CD4-positive, alpha-beta T cell (primary cell): ENCODE measurements at regions of chr1 and their contacts with region 1.

Region 1: DNA sequence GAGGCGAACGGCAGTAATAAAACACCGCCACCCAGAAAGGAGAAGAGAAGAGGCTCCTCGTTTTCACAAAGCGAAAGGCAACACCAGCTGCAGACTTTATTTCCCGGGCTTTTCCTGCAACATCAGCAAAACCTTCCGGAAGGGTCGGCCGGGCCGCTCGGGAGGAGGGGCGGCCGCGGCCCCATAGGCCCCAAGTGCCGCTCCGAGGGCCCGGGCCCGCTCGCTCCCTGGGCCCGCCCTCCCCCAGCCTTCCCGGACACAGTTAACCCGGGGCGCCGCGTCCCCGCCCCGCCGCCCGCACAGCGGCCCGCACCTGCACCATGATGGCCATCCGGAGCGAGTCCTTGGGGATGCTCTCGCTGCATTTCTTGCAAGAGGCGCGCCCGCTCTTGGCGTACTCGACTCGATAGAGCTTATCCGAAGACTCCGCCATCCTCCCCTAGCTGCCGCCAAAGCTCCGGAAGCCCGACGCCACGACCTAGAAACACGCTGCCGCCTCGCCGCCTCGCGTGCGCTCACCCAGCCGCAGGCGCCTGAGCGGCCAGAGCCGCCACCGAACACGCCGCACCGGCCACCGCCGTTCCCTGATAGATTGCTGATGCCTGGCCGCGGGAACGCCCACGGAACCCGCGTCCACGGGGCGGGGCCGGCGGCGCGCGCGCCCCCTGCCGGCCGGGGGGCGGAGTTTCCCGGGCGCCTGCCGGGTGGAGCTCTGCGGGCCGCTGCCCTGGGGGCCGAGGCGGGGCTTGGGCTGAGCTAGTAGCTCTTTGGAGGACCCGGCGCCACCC is at the start of gene PARP1:
- DNase-seq: peak; percentile 75 to 95 (median 85)
- ATAC-seq: peak; percentile 82
- H3K4me3 ChIP-seq: peak within 1 kb of the TSS; percentile 79
- H3K4me3 Mint-ChIP-seq: peak within 1 kb of the TSS; percentile 98
- H3K27ac ChIP-seq: peak within 1 kb of the TSS; percentile 48 to 55
- H3K27ac Mint-ChIP-seq: peak within 1 kb of the TSS; percentile 94
- H3K4me1 ChIP-seq: peaks cover 46% of the 10 kb centered on the region
- H3K4me1 Mint-ChIP-seq: peaks cover 55% of the 10 kb centered on the region
- H3K27me3 ChIP-seq: no peaks in the 10 kb centered on the region
- H3K27me3 Mint-ChIP-seq: no peaks in the 10 kb centered on the region
- CTCF ChIP-seq: peak; percentile 69
- total RNA-seq, gene PARP1: 59.3 to 63.6 TPM

Region 2: DNA sequence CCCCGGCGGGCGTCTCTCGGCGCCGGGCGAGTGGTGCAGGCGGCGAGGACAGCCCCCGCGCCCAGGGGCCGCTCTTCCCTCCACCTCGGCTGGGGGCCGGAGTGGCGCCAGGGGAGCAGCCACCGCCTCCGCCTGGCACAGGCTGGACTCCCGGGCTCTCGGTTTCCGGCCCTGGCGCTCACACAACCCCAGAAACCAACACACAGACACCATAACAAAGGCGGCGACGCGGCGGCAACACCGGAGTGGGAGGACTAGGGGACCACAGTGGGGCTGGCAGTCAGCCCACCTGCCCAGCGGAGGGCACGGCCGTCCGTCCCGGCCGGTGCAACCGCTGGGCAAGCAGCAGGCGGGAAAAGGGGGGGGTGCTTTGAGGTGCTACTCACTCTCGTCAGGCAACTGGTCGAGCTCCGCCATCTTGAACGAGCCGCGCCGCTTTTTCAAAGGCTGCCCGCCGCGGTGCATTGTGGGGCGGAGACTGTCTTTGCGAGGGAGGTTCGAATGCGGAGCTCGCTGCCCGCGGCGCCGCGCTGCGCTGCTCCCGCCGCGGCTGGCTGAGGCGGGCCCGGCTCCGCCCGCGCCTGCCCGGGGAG is 98.9 kb before region 1 on chr1 and contains the start of gene LIN9:
- CTCF ChIA-PET with region 1: interaction called, 5 read pairs
- POLR2A ChIA-PET with region 1: interaction called, 18 read pairs
- intact Hi-C with region 1: loop called in 1 of 2 experiments (anchors 5 kb)
- DNase-seq: peak; percentile 83 to 94 (median 89)
- ATAC-seq: peak; percentile 91
- H3K4me3 ChIP-seq: peak within 1 kb of the TSS; percentile 98
- H3K4me3 Mint-ChIP-seq: peak within 1 kb of the TSS; percentile 95
- H3K27ac ChIP-seq: peak within 1 kb of the TSS in 1 of 2 donors; percentile 30
- H3K27ac Mint-ChIP-seq: peak within 1 kb of the TSS; percentile 67
- H3K4me1 ChIP-seq: peaks cover 12% of the 10 kb centered on the region
- H3K4me1 Mint-ChIP-seq: peaks cover 26% of the 10 kb centered on the region
- H3K27me3 ChIP-seq: peaks cover 0 to 8% of the 10 kb centered on the region in 2 experiments
- H3K27me3 Mint-ChIP-seq: peaks cover 25% of the 10 kb centered on the region
- CTCF ChIP-seq: no peak
- total RNA-seq, gene LIN9: 1.3 to 1.5 TPM

Region 3: DNA sequence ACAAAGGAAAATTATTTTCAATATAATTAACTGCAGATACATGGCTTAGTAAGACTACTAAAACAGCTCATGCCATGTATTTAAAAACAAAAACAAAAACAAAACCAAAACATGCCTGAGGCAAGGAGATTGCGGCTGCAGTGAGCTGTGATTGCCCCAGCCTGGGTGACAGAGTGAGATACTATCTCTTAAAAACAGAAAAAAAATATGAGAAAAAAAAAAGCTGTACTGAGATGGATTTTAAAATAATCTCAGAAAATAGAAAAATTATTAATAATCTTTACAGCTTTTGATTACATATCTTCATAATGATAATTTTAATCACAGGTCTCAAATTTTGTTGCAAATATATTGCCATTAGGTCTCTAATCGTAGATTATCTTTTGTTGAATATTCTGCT is 74.7 kb before region 1 on chr1:
- CTCF ChIA-PET with region 1: interaction called, 12 read pairs
- POLR2A ChIA-PET with region 1: interaction called, 4 read pairs
- intact Hi-C with region 1: no loop called
- DNase-seq: peak in 2 of 14 experiments; percentile 11 to 23
- ATAC-seq: peak; percentile 35
- H3K4me3 ChIP-seq: peak overlapping the region; percentile 13
- H3K4me3 Mint-ChIP-seq: peak overlapping the region; percentile 26
- H3K27ac ChIP-seq: no peak overlapping the region
- H3K27ac Mint-ChIP-seq: no peak overlapping the region
- H3K4me1 ChIP-seq: peaks cover 4% of the 10 kb centered on the region
- H3K4me1 Mint-ChIP-seq: peaks cover 6% of the 10 kb centered on the region
- H3K27me3 ChIP-seq: no peaks in the 10 kb centered on the region
- H3K27me3 Mint-ChIP-seq: no peaks in the 10 kb centered on the region
- CTCF ChIP-seq: no peak

Region 4: DNA sequence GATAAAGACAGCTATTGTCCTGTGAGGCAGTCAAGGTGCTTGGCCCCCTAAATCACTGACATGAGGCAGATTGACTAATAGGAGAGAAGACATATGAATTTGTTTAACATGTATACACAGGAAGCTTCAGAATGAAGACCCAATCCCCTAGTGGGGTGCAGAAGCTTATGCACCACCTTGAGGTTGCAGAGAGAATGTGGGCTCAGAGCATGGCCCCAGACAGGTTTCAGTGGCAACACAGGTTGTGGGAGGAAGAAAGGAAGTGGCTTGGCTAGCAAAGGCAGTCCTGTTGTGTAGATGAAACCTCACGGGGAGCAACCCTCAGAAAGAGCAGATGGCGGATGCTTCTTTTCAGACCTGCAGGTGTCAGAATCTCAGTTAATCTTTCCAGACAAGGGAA is 37.2 kb after region 1 on chr1:
- CTCF ChIA-PET with region 1: interaction called, 5 read pairs
- POLR2A ChIA-PET with region 1: interaction called, 25 read pairs
- intact Hi-C with region 1: loop called in 1 of 2 experiments (anchors 5 kb)
- DNase-seq: peak; percentile 37 to 89 (median 60)
- ATAC-seq: peak; percentile 99
- H3K4me3 ChIP-seq: no peak overlapping the region
- H3K4me3 Mint-ChIP-seq: peak overlapping the region; percentile 42
- H3K27ac ChIP-seq: peak overlapping the region in 1 of 2 donors; percentile 10
- H3K27ac Mint-ChIP-seq: peak overlapping the region; percentile 80
- H3K4me1 ChIP-seq: peaks cover 32% of the 10 kb centered on the region
- H3K4me1 Mint-ChIP-seq: peaks cover 35% of the 10 kb centered on the region
- H3K27me3 ChIP-seq: no peaks in the 10 kb centered on the region
- H3K27me3 Mint-ChIP-seq: no peaks in the 10 kb centered on the region
- CTCF ChIP-seq: peak; percentile 45

Region 5: GRCh38 chr1:226457307-226457712 is 49.6 kb after region 1 on chr1:
- CTCF ChIA-PET with region 1: interaction called, 9 read pairs
- POLR2A ChIA-PET with region 1: interaction called, 21 read pairs
- intact Hi-C with region 1: no loop called
- DNase-seq: peak; percentile 17 to 73 (median 40)
- ATAC-seq: peak; percentile 89
- H3K4me3 ChIP-seq: peak overlapping the region; percentile 38
- H3K4me3 Mint-ChIP-seq: peak overlapping the region; percentile 88
- H3K27ac ChIP-seq: no peak overlapping the region
- H3K27ac Mint-ChIP-seq: peak overlapping the region; percentile 81
- H3K4me1 ChIP-seq: peaks cover 9% of the 10 kb centered on the region
- H3K4me1 Mint-ChIP-seq: peaks cover 14% of the 10 kb centered on the region
- H3K27me3 ChIP-seq: no peaks in the 10 kb centered on the region
- H3K27me3 Mint-ChIP-seq: no peaks in the 10 kb centered on the region
- CTCF ChIP-seq: peak; percentile 57